Activated CD4-positive, alpha-beta memory T cell treated with anti-CD3 and anti-CD28 coated beads for 36 hours (primary cell): ENCODE measurements at regions of chr10 and their contacts with region 1.

Region 1: GRCh38 chr10:22436884-22437619 is 91.8 kb downstream of the SPAG6 start:
- DNase-seq: peak; percentile 89
- H3K4me3 Mint-ChIP-seq: peak overlapping the region; percentile 88
- H3K27ac Mint-ChIP-seq: peak overlapping the region; percentile 91
- H3K4me1 Mint-ChIP-seq: peaks cover 50% of the 10 kb centered on the region
- H3K27me3 Mint-ChIP-seq: no peaks in the 10 kb centered on the region

Region 2: GRCh38 chr10:22228943-22229801 is 207.9 kb before region 1 on chr10:
- CTCF ChIA-PET with region 1: no interaction called
- POLR2A ChIA-PET with region 1: interaction called, 5 read pairs
- intact Hi-C with region 1: loop called (anchors 1 kb)
- DNase-seq: peak; percentile 90
- H3K4me3 Mint-ChIP-seq: peak overlapping the region; percentile 77
- H3K27ac Mint-ChIP-seq: peak overlapping the region; percentile 96
- H3K4me1 Mint-ChIP-seq: peaks cover 16% of the 10 kb centered on the region
- H3K27me3 Mint-ChIP-seq: peaks cover 4% of the 10 kb centered on the region

Region 3: DNA sequence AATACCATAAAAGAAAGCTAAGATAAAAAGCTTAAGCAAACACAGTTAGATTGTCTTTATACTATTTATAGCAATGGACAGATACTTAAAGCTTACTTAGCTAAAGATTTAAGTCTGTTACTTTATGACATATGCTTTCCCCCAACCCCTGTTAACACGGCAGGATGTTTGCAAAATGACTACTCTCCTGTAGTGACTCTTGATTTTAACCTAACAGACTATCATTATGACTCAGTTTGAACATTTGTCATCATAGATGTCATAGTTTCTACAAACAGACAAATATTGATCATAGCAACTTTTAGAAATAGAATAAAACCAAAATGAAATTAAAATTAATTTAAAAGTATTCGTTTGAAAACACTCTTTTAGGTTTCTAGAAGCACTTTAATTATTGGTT is 128.7 kb before region 1 on chr10:
- CTCF ChIA-PET with region 1: no interaction called
- POLR2A ChIA-PET with region 1: no interaction called
- intact Hi-C with region 1: no loop called
- DNase-seq: peak; percentile 53
- H3K4me3 Mint-ChIP-seq: no peak overlapping the region
- H3K27ac Mint-ChIP-seq: no peak overlapping the region
- H3K4me1 Mint-ChIP-seq: peaks cover 8% of the 10 kb centered on the region
- H3K27me3 Mint-ChIP-seq: no peaks in the 10 kb centered on the region

Region 4: DNA sequence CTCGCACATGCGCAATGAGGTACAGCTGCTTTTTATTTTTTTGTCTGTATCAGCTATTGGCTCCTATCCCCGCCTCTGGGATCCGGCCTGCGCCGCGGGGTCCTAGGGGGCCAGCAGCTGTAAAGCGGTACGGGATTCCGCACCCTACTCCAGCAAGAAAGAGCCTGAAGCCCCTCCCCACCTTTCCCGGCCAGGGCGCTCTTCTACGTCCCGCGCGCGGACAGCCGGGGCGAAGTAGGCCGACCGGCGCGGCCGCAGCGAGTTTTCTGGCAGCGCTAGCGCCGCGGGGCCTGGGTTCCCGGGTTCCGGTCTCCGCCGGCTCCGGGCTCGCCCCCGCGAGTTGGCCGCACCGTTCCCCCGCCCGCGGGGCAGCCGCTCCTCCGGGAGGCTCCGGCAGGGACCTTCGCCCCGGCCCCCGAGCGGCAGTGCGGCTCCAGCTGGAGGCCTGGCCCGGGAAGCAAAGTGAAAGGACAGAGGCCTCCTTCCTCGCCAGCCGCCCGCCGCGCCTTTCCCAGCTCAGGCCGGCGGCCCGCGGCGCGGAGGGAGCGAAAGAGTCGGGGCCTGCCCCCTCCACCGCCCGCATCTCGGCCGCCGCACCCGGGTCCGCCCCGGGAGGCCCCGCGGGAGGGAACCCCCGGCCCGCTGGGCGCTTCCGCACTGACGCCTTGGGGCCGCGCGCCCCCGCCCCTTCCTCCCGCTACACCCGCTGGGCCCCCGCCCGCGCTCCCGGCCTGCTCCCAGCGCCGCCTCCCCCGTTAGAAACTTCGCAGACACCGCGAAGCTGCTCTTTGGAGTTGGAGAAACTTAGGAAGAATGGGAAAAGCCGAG is 96.5 kb before region 1 on chr10:
- CTCF ChIA-PET with region 1: interaction called, 5 read pairs
- POLR2A ChIA-PET with region 1: interaction called, 6 read pairs
- intact Hi-C with region 1: loop called (anchors 2 kb)
- DNase-seq: peak; percentile 70
- H3K4me3 Mint-ChIP-seq: peak overlapping the region; percentile 83
- H3K27ac Mint-ChIP-seq: peak overlapping the region; percentile 87
- H3K4me1 Mint-ChIP-seq: peaks cover 25% of the 10 kb centered on the region
- H3K27me3 Mint-ChIP-seq: peaks cover 60% of the 10 kb centered on the region

Region 5: GRCh38 chr10:22379059-22379458 is 58.0 kb before region 1 on chr10:
- CTCF ChIA-PET with region 1: no interaction called
- POLR2A ChIA-PET with region 1: no interaction called
- intact Hi-C with region 1: loop called (anchors 2 kb)
- DNase-seq: peak; percentile 70
- H3K4me3 Mint-ChIP-seq: no peak overlapping the region
- H3K27ac Mint-ChIP-seq: peak overlapping the region; percentile 53
- H3K4me1 Mint-ChIP-seq: peaks cover 12% of the 10 kb centered on the region
- H3K27me3 Mint-ChIP-seq: no peaks in the 10 kb centered on the region

Region 6: DNA sequence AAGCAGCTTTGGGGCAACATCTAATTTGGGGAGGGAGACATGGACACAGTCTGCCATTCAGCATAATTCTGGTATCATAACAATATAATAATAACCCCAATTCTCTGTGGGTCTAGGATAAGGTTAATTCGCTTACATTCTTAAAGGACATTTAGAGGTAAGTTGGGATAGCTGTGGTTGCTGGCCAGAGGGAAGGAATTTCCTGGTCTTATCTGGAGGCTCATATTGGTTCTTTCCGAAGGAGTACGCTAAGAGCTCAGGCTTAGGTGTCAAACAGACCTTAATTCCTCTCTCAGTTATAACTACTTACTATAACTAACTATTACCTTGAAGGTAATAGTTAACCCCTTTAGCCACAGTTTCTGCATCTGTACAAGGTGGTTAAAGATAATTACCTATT is 22.9 kb before region 1 on chr10:
- CTCF ChIA-PET with region 1: no interaction called
- POLR2A ChIA-PET with region 1: no interaction called
- intact Hi-C with region 1: no loop called
- DNase-seq: no peak
- H3K4me3 Mint-ChIP-seq: no peak overlapping the region
- H3K27ac Mint-ChIP-seq: no peak overlapping the region
- H3K4me1 Mint-ChIP-seq: no peaks in the 10 kb centered on the region
- H3K27me3 Mint-ChIP-seq: peaks cover 5% of the 10 kb centered on the region

Region 7: GRCh38 chr10:22475651-22476600 is 38.9 kb after region 1 on chr10:
- CTCF ChIA-PET with region 1: no interaction called
- POLR2A ChIA-PET with region 1: no interaction called
- intact Hi-C with region 1: no loop called
- DNase-seq: peak; percentile 57
- H3K4me3 Mint-ChIP-seq: peak overlapping the region; percentile 80
- H3K27ac Mint-ChIP-seq: no peak overlapping the region
- H3K4me1 Mint-ChIP-seq: peaks cover 13% of the 10 kb centered on the region
- H3K27me3 Mint-ChIP-seq: peaks cover 55% of the 10 kb centered on the region